ENCODE measurements at regions of chr9 and their contacts with region 1.

Region 1: DNA sequence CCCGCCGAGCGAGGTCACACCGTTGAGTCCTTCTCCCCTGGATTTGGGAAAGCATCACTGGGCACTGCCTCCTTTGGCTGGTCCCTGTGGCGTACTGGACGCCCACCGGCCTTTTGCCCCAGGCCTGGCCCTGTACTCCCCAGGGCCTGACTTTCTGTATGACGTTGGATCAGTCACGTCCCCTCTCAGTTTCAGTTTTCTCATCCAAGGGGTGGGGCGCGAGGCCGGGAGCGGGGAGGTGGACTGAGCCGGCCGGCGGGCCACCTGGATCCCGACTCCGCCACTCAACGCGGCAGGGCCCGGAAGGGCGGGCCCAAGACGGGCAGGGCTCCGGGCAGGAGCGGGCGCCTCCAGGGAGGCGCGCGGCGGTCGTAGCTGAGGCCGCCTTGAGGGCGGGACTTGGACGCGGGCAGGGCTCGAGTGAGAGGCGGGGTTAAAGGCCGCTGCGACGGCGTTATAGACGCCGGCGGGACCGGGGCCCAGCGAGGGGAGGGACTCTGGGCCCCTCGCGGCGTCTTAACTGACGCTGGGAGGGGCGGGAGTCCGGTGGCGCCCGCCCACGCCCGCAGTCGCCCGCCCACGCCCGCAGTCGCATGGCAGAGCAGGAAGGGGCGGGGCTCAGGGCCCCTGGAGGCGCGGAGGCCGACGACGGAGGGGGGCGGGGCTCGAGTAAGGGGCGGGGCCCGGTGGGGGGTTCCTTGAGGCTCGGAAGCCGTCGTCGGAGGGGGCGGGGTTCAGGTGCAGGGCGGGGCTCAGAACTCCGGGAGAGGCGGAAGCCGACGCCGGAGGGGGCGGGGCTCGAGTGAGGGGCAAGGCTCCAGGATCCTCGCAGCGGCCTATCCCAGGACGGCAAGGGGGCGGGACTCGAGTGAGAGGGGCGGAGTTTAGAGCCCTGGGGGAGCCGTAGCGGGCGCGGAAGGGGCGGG is 549 bp upstream of the CARD19 start:
- DNase-seq: peak; percentile 71
- ATAC-seq: peak; percentile 87
- H3K4me3 ChIP-seq: peak overlapping the region; percentile 51 to 57
- H3K27ac ChIP-seq: peak overlapping the region; percentile 90
- H3K4me1 ChIP-seq: peaks cover 26% of the 10 kb centered on the region
- H3K27me3 ChIP-seq: no peaks in the 10 kb centered on the region
- CTCF ChIP-seq: no peak

Region 2: DNA sequence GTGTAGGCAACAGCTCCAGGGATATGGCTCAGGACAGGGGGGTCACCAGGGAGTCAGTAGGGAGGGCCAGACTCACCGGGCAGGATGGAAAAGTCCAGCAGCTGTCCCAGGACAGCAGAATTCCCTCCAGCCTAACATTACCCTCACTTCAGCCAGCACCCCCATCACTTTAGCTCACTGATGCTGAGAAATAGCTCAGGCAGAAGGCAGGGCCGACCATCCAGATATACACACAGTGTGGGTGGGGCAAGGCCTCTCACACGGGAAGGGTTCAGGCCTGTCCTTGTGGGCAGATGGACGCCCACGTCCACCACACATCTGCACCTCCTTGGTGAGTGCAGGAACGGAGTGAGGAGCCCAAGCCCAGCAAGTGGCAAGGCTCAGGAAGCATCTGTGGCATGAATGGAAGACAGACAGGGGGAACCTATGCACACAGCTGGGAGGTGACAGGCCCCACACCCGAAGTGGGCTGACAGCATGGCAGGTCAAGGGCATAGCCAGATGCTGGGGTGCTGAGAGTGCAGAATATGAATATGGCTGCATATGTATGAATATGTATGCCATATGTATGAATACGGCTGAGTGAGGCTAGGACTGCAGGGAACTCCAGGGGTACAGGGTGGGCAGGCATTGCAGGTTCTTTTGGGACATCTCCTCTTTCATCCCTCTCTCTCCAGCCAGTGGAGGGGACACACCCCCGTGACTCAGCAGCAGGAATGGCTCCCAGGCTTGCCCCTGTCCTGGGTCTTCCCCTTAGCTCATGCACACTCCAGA is 347.8 kb before region 1 on chr9:
- CTCF ChIA-PET with region 1: no interaction called
- POLR2A ChIA-PET with region 1: no interaction called
- in situ Hi-C with region 1: no loop called
- intact Hi-C with region 1: no loop called
- DNase-seq: no peak
- ATAC-seq: peak; percentile 53; the same call in 1 of the 2 replicates
- H3K4me3 ChIP-seq: no peak overlapping the region
- H3K27ac ChIP-seq: no peak overlapping the region
- H3K4me1 ChIP-seq: no peaks in the 10 kb centered on the region
- H3K27me3 ChIP-seq: no peaks in the 10 kb centered on the region
- CTCF ChIP-seq: no peak

Region 3: GRCh38 chr9:93003552-93004407 is 91.7 kb before region 1 on chr9:
- CTCF ChIA-PET with region 1: no interaction called
- POLR2A ChIA-PET with region 1: no interaction called
- in situ Hi-C with region 1: no loop called
- intact Hi-C with region 1: loop called (anchors 10 kb)
- DNase-seq: peak; percentile 24
- ATAC-seq: peak; percentile 96
- H3K4me3 ChIP-seq: peak overlapping the region; percentile 50 to 68
- H3K27ac ChIP-seq: 0 out of 2 replicates have a peak overlapping the region, but pooled peaks have one; percentile 44
- H3K4me1 ChIP-seq: peaks cover 3% of the 10 kb centered on the region
- H3K27me3 ChIP-seq: no peaks in the 10 kb centered on the region
- CTCF ChIP-seq: peak; percentile 86

Region 4: GRCh38 chr9:93050231-93050630 is 45.2 kb before region 1 on chr9:
- CTCF ChIA-PET with region 1: interaction called, 12 read pairs
- POLR2A ChIA-PET with region 1: no interaction called
- in situ Hi-C with region 1: no loop called
- intact Hi-C with region 1: no loop called
- DNase-seq: no peak
- ATAC-seq: no peak
- H3K4me3 ChIP-seq: no peak overlapping the region
- H3K27ac ChIP-seq: no peak overlapping the region
- H3K4me1 ChIP-seq: no peaks in the 10 kb centered on the region; the same call in 1 of the 2 replicates
- H3K27me3 ChIP-seq: no peaks in the 10 kb centered on the region
- CTCF ChIP-seq: no peak

Region 5: DNA sequence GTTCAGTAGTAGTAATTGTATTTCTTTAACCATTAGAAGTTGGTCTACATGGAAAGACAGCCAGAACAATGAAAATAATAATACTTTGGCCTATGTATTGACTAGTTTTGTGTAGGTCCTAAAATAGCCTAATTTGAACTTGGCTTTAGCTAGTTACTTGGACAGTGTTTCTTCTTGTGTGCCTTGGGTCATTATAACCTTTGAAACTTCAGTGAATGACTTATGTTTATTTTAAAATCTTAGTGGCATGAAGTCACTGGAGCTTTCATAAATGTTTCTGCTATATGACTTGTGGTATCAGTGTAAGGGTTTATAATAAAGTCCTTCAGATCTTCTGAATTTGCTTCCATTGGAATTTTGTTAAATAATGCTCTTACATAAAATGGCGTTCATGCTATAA is 360.6 kb after region 1 on chr9:
- CTCF ChIA-PET with region 1: no interaction called
- POLR2A ChIA-PET with region 1: interaction called, 16 read pairs
- in situ Hi-C with region 1: no loop called
- intact Hi-C with region 1: no loop called
- DNase-seq: no peak
- ATAC-seq: no peak
- H3K4me3 ChIP-seq: no peak overlapping the region
- H3K27ac ChIP-seq: no peak overlapping the region
- H3K4me1 ChIP-seq: peaks cover 11% of the 10 kb centered on the region
- H3K27me3 ChIP-seq: no peaks in the 10 kb centered on the region
- CTCF ChIP-seq: no peak